MCF 10A (cell line): ENCODE measurements at regions of chr1 and their contacts with region 1.

Region 1: DNA sequence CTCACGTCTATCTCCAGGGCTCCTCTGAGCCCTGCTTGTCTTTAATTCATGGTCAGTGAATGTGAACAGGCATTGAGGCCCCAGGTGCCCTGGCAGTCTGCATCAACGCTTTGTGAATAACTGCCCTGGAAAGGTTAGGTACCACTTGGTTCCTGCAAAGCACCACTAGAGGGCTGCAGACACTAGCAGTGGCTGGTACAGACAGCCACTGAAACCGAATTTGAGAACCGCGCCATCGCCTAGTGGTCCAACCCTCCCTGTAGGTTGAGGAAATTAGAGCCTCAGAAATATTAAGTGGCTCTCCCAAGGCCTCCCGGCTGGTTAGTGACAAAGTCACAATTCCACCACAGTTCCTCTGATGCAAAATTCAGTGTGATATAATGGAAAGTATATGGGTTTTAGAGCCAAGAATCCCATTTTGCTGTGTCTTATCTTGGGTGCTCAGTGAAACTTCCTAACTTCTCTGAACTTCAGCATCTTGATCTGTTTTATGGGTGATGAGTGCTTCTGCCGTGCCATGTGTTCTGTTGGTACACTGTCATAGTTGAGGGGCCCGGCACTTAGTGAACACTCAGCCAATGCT is 46.2 kb upstream of the BCL9 start:
- DNase-seq: peak; percentile 81
- H3K4me3 Mint-ChIP-seq: no peak overlapping the region
- H3K27ac Mint-ChIP-seq: no peak overlapping the region
- H3K4me1 Mint-ChIP-seq: no peaks in the 10 kb centered on the region
- H3K27me3 Mint-ChIP-seq: peaks cover 60% of the 10 kb centered on the region
- CTCF ChIP-seq: peak; percentile 97

Region 2: DNA sequence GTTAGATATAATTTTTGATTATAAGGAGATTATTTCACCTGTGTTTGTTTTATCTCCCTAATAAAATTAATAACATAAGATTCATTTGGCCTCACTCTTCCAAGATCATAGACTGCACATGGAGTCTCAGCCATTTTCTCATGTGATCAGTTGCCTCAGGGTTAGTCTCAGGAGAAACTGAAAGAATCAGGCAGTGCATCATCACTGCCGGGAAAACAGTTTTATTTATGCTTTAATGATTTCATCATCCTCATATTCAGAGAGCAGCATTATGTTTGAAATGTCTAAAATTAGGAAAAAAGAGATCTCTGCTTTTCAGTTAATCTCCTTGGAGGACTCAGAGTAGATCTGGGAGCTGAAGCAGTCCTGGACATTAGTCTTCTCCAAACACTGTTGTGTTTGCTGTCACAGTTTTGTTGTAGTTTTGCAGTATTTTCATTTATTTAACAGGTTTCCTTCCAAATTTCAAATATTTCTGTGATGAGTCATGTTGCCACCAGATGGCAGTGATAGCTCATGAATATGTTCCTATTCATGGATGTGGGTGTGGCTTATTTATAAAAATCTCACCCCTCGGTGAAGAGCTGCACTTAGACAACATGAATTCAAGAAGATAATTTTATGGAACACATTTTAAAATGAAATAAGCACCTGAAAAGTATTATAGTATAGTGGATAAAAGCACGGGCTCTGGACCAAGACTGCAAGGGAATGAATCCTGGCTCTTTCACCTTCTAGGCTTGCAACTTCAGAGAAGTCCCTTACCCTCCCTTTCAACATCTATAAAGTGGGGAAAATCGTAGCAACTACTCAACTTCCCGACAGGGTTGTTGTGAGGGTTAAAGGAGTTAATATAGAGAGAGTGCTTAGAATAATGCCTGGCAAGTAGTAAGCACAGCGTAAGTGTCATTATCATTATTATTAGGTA is 221.4 kb before region 1 on chr1:
- CTCF ChIA-PET with region 1: interaction called, 5 read pairs
- POLR2A ChIA-PET with region 1: interaction called, 3 read pairs
- intact Hi-C with region 1: loop called (anchors 2 kb)
- DNase-seq: peak; percentile 92
- H3K4me3 Mint-ChIP-seq: peak overlapping the region; percentile 55
- H3K27ac Mint-ChIP-seq: peak overlapping the region; percentile 93
- H3K4me1 Mint-ChIP-seq: peaks cover 14% of the 10 kb centered on the region
- H3K27me3 Mint-ChIP-seq: no peaks in the 10 kb centered on the region
- CTCF ChIP-seq: peak; percentile 37

Region 3: GRCh38 chr1:147515046-147515869 is 20.2 kb after region 1 on chr1:
- CTCF ChIA-PET with region 1: interaction called, 20 read pairs
- POLR2A ChIA-PET with region 1: no interaction called
- intact Hi-C with region 1: no loop called
- DNase-seq: peak; percentile 84
- H3K4me3 Mint-ChIP-seq: no peak overlapping the region
- H3K27ac Mint-ChIP-seq: no peak overlapping the region
- H3K4me1 Mint-ChIP-seq: peaks cover 7% of the 10 kb centered on the region
- H3K27me3 Mint-ChIP-seq: no peaks in the 10 kb centered on the region
- CTCF ChIP-seq: peak; percentile 27

Region 4: GRCh38 chr1:147627435-147628110 is 132.5 kb after region 1 on chr1:
- CTCF ChIA-PET with region 1: interaction called, 55 read pairs
- POLR2A ChIA-PET with region 1: no interaction called
- intact Hi-C with region 1: loop called (anchors 1 kb)
- DNase-seq: peak; percentile 65
- H3K4me3 Mint-ChIP-seq: no peak overlapping the region
- H3K27ac Mint-ChIP-seq: no peak overlapping the region
- H3K4me1 Mint-ChIP-seq: no peaks in the 10 kb centered on the region
- H3K27me3 Mint-ChIP-seq: no peaks in the 10 kb centered on the region
- CTCF ChIP-seq: peak; percentile 95

Region 5: GRCh38 chr1:147635342-147635741 is 140.3 kb after region 1 on chr1:
- CTCF ChIA-PET with region 1: interaction called, 63 read pairs
- POLR2A ChIA-PET with region 1: interaction called, 4 read pairs
- intact Hi-C with region 1: no loop called
- DNase-seq: no peak
- H3K4me3 Mint-ChIP-seq: no peak overlapping the region
- H3K27ac Mint-ChIP-seq: no peak overlapping the region
- H3K4me1 Mint-ChIP-seq: no peaks in the 10 kb centered on the region
- H3K27me3 Mint-ChIP-seq: no peaks in the 10 kb centered on the region
- CTCF ChIP-seq: no peak

Region 6: DNA sequence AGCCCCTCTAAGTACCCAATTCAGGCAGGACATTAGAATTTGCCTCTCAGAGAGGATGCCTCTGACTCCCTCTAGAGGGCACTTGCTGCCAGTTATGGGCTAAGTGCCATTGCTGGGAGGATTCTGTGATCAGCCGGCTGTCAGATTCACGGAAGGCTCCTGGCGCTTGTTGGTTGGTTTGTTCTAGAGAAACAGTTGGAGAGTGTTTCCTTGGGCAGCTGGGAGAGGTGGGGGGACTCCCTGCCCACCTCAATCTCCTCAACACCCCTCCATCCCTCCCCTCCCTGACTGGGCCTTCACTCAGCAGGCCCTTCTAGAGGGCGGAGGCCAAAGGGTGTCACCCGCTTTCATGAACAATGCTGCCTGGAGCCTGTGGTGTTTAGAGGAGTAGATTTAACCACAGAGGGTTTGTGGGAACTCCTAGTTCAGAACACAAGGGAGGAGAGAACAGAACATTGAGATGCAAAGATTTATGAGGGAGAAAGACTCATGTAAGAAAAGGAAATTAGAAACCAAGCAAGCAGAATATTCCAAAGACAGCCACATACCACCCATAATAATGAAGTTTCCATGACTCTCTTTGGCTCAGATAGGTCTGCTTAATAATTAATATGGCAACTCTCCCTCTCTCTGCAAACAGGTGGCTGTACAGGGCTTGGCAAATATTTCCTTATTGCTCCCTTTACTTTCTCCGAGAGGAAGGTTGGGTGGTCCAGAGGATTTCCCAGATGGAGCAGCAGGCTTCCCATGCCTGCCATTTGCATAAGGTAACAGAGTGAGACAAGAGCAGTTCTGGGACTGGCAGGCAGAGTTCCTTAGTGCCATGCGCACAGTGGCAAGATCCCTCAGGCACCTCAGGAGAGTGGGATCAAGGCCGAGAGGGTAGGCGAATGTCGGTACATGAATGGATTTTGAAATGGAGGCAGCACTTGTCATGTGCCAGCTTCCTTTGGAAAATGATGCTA is 205.2 kb after region 1 on chr1:
- CTCF ChIA-PET with region 1: interaction called, 3 read pairs
- POLR2A ChIA-PET with region 1: no interaction called
- intact Hi-C with region 1: loop called (anchors 1 kb)
- DNase-seq: peak; percentile 81
- H3K4me3 Mint-ChIP-seq: no peak overlapping the region
- H3K27ac Mint-ChIP-seq: no peak overlapping the region
- H3K4me1 Mint-ChIP-seq: peaks cover 7% of the 10 kb centered on the region
- H3K27me3 Mint-ChIP-seq: no peaks in the 10 kb centered on the region
- CTCF ChIP-seq: peak; percentile 96